Mammary epithelial cell (primary cell): ENCODE measurements at regions of chr3 and their contacts with region 1.

Region 1: DNA sequence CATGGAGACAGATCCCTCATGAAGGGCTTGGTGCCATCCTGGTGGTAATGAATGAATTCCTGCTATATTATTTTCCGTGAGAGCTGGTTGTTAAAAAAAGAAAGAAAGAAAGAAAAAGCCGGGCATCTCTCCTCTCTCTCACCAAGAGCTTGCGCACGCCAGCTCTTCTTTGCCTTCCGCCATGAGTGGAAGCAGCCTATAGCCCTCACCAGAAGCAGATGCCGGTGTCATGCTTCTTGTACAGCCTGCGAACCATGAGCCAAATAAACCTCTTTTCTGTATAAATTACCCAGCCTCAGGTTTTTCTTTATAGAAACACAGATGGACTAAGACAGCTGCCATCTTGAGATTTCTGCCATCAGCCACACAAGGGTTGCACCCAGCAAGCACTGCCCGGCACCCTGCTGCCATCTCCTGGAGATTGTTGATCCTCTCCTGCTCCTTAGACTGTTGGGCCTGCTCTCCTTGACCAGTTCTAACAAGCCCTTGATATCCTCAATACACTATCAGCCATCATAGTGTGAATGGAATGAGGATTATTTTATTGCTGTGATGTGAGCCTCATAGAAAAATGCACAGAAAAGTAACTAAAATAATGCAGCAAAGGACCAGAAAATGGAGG is 3.5 kb upstream of the AHSG start:
- DNase-seq: peak; percentile 72
- H3K4me3 ChIP-seq: no peak overlapping the region
- H3K27ac ChIP-seq: no peak overlapping the region
- H3K4me1 ChIP-seq: peaks cover 9% of the 10 kb centered on the region
- H3K27me3 ChIP-seq: no peaks in the 10 kb centered on the region
- CTCF ChIP-seq: peak; percentile 68 to 84

Region 2: DNA sequence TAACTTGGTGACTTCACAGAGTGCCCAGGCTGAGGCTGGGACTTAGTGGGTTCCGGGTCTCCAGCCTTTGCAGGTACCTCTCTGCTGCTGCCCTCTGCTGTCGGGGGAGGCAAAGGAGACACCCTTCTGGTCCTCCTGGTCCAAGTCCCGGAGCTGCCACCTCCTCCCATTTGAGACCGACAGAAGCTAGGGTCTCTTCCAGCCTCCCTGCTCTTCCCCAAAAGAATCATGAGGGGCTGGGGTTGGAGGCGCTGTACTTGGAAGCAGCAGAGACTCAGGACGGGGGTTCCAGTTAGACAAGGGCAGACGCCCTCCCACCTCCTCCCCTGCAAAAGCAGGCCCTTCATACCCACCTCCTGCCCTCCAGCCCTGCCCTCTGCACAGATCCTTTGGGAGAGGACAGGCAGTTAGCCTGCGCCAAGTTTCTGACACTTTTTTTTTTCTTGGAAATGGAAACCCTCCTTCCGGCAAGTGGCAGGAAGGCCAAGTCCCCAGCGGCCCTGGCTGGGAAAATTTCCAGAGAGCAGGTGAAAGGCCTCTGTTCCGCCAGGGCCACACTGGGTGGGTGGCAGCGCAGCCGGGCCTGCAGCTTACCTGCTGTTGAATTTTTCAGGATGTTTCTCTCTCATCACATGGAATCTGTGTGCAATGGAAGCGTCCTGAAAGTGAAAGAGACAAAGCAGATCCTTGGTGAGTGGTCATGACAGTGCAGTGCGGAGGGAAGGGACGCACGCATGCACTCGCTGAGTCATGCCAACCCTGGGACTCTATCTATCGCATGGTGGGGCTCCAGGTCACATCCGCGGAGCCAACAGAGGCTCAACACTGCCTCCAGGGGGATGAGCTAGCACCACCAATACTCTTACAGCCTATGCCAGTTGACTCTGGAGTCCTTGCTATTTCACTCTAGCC is 367.2 kb before region 1 on chr3:
- CTCF ChIA-PET with region 1: no interaction called
- dilution Hi-C with region 1: no loop called
- in situ Hi-C with region 1: no loop called
- intact Hi-C with region 1: loop called (anchors 5 kb)
- DNase-seq: peak; percentile 83
- H3K4me3 ChIP-seq: peak overlapping the region; percentile 14 to 35 (median 28)
- H3K27ac ChIP-seq: peak overlapping the region; percentile 5
- H3K4me1 ChIP-seq: peaks cover 8% of the 10 kb centered on the region
- H3K27me3 ChIP-seq: no peaks in the 10 kb centered on the region
- CTCF ChIP-seq: peak; percentile 56 to 75

Region 3: DNA sequence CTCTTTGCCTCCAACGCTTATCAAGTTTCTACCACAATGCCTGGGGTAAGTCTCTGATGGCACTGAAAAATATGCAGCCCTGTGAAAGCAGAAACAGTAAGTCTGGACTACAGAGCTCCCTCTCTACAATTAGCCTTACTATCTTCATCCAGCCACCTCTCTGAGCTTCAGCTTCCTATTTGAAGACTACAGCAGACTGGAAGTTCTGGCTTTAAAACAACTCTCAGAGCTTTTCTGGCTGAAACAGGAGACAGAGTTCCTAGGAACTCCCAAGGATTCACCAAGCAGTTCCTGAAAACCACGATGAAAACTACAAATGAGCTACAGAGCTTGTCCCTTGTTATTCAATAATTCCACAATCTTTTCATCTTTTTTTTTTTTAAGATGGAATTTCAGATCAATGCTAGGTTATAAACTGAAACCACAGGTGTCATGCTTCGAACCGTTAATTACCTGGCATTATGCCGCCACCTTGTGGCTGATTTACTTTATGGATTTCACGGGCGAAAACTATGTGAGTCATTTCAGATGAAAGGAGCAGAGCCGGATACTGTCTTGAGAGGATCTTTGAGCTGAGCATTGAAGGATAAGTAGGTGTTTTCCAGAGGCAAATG is 69.0 kb before region 1 on chr3:
- CTCF ChIA-PET with region 1: interaction called, 5 read pairs
- dilution Hi-C with region 1: no loop called
- in situ Hi-C with region 1: no loop called
- intact Hi-C with region 1: loop called (anchors 1 kb)
- DNase-seq: peak; percentile 78
- H3K4me3 ChIP-seq: no peak overlapping the region
- H3K27ac ChIP-seq: peak overlapping the region; percentile 4
- H3K4me1 ChIP-seq: peaks cover 17% of the 10 kb centered on the region
- H3K27me3 ChIP-seq: no peaks in the 10 kb centered on the region
- CTCF ChIP-seq: peak; percentile 64 to 66

Region 4: DNA sequence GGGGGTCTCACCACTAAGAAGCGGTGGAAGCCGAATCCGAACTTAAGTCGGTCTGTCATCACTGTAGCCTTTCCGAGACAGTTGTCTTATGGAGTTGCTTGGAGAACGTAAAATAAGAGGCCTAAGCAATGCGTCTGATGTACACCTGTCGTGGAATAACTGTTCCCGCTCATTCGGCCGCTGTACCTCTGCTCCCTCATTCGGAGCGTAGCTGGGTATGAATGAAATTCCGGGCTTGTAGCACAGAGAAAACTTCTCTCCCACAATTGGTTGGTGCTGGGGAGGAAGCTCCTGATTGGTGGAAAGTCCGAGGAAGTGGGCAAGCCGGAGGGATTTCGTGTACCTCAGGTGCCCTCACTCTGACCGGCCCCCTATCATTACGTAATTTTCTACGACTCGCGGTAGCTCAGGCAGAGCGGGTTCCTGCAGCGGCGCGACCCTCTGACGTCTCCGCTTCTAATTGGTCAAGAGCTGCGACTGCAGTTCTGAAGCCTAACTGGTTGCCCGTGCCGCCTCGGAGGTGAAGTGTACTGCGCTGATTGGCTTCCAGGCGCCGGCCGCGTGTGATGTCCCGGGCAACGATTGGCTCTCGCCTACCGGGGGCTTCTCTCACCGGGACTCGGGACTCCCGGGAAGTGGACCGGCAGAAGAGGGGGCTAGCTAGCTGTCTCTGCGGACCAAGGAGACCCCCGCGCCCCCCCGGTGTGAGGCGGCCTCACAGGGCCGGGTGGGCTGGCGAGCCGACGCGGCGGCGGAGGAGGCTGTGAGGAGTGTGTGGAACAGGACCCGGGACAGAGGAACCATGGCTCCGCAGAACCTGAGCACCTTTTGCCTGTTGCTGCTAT is 39.0 kb before region 1 on chr3 and contains the start of gene DNAJB11:
- CTCF ChIA-PET with region 1: interaction called, 5 read pairs
- dilution Hi-C with region 1: no loop called
- in situ Hi-C with region 1: no loop called
- intact Hi-C with region 1: loop called (anchors 1 kb)
- DNase-seq: peak; percentile 100
- H3K4me3 ChIP-seq: peak within 1 kb of the TSS; percentile 66 to 93 (median 69)
- H3K27ac ChIP-seq: peak within 1 kb of the TSS; percentile 87
- H3K4me1 ChIP-seq: peaks cover 25% of the 10 kb centered on the region
- H3K27me3 ChIP-seq: no peaks in the 10 kb centered on the region
- CTCF ChIP-seq: no peak
- total RNA-seq, gene DNAJB11: 27.0 to 70.8 TPM

Region 5: DNA sequence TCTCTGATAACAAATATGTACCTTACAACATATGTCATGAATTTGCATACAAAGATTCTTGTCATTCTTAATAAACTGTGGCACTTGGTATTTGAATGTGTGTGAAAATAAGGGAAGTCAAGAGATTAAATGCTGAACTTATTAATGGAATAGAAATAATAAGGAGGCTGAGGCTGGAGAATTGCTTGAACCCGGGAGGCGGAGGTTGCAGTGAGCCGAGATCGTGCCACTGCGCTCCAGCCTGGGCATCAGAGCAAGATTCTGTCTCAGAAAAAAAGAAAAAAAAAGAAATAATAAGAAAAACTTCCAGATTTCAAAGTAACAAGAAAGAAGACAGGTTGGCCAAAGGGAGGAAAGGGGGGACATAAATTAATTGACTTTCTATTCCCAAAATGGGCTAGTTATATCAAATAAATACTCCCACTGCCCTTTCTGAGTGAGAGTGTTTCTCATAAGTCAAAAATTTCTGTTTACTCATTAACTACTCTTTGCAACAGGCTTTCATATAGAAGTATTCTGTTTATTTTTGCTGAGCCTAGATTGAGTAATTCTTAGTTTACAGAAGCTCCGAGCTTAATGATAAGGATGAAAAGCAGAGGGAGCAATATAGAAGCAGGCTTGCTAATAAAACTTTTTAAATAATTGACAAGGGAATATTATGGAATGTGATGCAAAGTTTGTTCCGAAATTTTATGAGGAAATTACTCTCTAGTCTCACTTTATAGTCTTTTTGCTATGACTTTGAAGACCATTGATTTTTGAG is 133.4 kb after region 1 on chr3:
- CTCF ChIA-PET with region 1: no interaction called
- dilution Hi-C with region 1: no loop called
- in situ Hi-C with region 1: no loop called
- intact Hi-C with region 1: no loop called
- DNase-seq: no peak
- H3K4me3 ChIP-seq: no peak overlapping the region
- H3K27ac ChIP-seq: no peak overlapping the region
- H3K4me1 ChIP-seq: peaks cover 4% of the 10 kb centered on the region
- H3K27me3 ChIP-seq: no peaks in the 10 kb centered on the region
- CTCF ChIP-seq: no peak